ENCODE measurements at regions of chr17 and their contacts with region 1.

Region 1: GRCh38 chr17:67824735-67825626 is at the start of gene BPTF:
- DNase-seq: peak; percentile 94
- ATAC-seq: peak; percentile 77
- H3K4me3 Mint-ChIP-seq: peak within 1 kb of the TSS; percentile 98
- H3K27ac Mint-ChIP-seq: peak within 1 kb of the TSS; percentile 96
- H3K4me1 Mint-ChIP-seq: peaks cover 67% of the 10 kb centered on the region
- H3K27me3 Mint-ChIP-seq: no peaks in the 10 kb centered on the region
- CTCF ChIP-seq: no peak
- total RNA-seq, gene BPTF: 166 and 174 TPM in 2 replicates

Region 2: DNA sequence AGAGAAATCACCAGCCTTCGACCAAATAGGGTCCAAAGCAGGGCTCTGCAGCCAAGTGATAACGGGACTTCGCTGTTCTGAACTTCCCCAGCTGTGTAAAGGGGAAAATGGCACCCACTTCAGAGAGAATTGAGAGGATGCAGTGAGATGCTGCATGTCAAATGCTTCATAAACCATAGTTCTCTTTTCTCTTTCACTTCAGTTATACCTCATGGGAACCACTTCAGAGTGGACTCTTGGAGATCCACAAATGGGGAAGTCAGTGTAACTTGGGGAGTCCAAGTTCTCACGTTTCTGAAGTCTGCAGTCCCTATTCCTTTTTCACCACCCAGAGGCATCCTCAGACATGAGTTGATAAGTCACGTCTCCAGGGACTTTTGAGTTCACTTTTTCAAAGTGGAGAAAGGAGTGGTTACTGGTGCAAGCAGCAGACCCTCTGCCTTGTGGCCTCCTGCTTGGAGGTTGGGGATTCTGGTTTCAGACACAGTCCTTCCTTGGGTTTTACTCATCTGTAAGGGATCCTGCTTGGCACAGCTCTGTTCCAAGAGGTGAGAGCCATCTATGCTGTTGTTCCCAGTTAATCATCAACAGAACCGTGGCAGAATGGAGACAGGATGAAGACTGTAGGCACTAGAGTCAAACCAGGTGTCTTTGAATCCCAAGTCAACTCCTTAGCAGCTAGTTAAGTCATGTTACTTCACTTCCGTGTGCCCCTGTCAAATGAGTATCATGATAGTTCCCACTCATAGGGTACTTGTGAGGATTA is 230.7 kb before region 1 on chr17:
- CTCF ChIA-PET with region 1: no interaction called
- POLR2A ChIA-PET with region 1: no interaction called
- intact Hi-C with region 1: no loop called
- DNase-seq: no peak
- ATAC-seq: peak; percentile 40
- H3K4me3 Mint-ChIP-seq: no peak overlapping the region
- H3K27ac Mint-ChIP-seq: no peak overlapping the region
- H3K4me1 Mint-ChIP-seq: peaks cover 11% of the 10 kb centered on the region
- H3K27me3 Mint-ChIP-seq: no peaks in the 10 kb centered on the region
- CTCF ChIP-seq: no peak

Region 3: DNA sequence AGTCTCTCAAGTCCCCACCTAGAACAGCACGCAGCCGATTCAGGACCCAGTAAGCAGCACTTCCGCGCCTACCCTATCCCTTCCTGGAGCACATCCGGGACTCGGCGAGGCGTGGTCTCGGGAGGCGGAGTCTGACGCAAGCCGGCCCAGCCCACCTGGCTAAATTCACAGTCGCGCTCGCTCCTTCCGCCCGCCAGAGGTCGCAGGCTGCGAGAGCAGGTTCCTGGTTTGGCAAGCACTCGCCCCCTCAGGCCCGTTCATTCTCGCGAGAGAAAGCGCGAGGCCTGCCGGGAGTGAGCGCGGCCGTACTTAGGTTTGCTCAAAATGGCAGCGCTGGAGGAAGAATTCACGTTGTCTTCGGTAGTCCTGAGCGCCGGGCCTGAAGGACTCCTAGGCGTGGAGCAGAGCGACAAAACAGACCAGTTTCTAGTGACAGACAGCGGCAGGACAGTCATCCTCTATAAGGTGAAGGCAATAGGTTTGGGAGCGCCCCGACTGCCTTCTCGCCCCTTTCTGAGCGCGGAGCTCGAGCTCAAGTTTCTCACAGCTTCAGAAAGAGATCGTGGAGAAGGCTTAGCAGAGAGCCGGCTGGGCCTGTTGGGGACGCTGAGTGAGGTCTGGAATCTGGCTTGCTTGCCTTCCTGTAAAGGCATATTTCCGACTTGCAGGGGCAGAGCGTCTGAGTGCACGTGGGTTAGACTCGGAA is 107.2 kb before region 1 on chr17 and contains the start of gene NOL11:
- CTCF ChIA-PET with region 1: interaction called, 3 read pairs
- POLR2A ChIA-PET with region 1: interaction called, 9 read pairs
- intact Hi-C with region 1: loop called (anchors 1 kb)
- DNase-seq: peak; percentile 98
- ATAC-seq: peak; percentile 94
- H3K4me3 Mint-ChIP-seq: peak within 1 kb of the TSS; percentile 100
- H3K27ac Mint-ChIP-seq: peak within 1 kb of the TSS; percentile 99
- H3K4me1 Mint-ChIP-seq: peaks cover 30% of the 10 kb centered on the region
- H3K27me3 Mint-ChIP-seq: no peaks in the 10 kb centered on the region
- CTCF ChIP-seq: no peak
- total RNA-seq, gene NOL11: 67.9 and 70.6 TPM in 2 replicates

Region 4: DNA sequence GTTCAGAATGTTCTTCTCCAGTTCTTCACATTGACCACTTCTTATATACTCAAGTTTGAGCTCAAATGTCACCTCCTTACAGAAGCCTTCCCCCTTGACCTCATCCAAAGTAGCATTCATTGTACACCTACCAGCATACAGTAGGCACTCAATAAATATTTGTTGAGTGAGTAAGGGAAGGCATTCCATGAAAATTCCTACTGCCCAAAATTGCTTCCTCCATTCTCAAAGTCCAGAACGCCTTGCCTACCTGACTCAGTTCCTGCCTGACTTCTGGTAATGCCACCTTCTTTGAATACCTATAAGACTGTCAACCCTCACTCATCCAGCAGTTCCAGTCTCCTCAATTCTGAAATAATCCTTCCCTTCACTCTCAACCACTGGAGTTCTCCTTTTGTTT is 14.5 kb before region 1 on chr17:
- CTCF ChIA-PET with region 1: interaction called, 24 read pairs
- POLR2A ChIA-PET with region 1: interaction called, 112 read pairs
- intact Hi-C with region 1: loop called (anchors 1 kb)
- DNase-seq: no peak
- ATAC-seq: no peak
- H3K4me3 Mint-ChIP-seq: no peak overlapping the region
- H3K27ac Mint-ChIP-seq: peak overlapping the region; percentile 1
- H3K4me1 Mint-ChIP-seq: peaks cover 46% of the 10 kb centered on the region
- H3K27me3 Mint-ChIP-seq: no peaks in the 10 kb centered on the region
- CTCF ChIP-seq: no peak

Region 5: GRCh38 chr17:67862614-67863217 is 37.7 kb after region 1 on chr17:
- CTCF ChIA-PET with region 1: interaction called, 3 read pairs
- POLR2A ChIA-PET with region 1: no interaction called
- intact Hi-C with region 1: loop called (anchors 5 kb)
- DNase-seq: no peak
- ATAC-seq: no peak
- H3K4me3 Mint-ChIP-seq: no peak overlapping the region
- H3K27ac Mint-ChIP-seq: peak overlapping the region; percentile 52
- H3K4me1 Mint-ChIP-seq: peaks cover 56% of the 10 kb centered on the region
- H3K27me3 Mint-ChIP-seq: no peaks in the 10 kb centered on the region
- CTCF ChIP-seq: no peak

Region 6: DNA sequence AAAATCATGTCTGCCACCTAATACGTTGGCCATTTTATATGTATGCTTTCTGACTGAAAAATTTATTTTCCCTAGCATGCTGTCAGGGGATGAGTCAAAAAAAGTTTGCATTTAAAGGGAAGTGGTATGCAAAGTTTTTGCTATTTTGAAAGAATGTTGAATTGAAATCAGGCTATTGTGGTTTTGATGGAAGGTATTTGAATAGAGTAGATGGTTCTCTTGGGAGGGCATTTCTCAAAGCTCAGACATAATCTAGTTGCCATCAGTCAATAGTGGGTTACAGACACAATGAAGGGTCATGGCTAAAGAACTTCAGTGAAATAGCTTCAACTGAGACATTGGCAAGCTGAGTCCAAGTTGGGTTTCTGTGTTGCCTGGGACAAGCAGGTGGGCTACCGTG is 1691.9 kb after region 1 on chr17:
- CTCF ChIA-PET with region 1: no interaction called
- POLR2A ChIA-PET with region 1: no interaction called
- intact Hi-C with region 1: loop called (anchors 10 kb)
- DNase-seq: no peak
- ATAC-seq: peak; percentile 91
- H3K4me3 Mint-ChIP-seq: peak overlapping the region; percentile 48
- H3K27ac Mint-ChIP-seq: peak overlapping the region; percentile 46
- H3K4me1 Mint-ChIP-seq: peaks cover 33% of the 10 kb centered on the region
- H3K27me3 Mint-ChIP-seq: peaks cover 17% of the 10 kb centered on the region
- CTCF ChIP-seq: no peak

Measured in activated B cell treated with CpG ODN at 0.5 μM for 24 hours (primary cell).